CD4-positive, alpha-beta memory T cell (primary cell): ENCODE measurements at regions of chr1 and their contacts with region 1.

Region 1: GRCh38 chr1:92994105-92994712 is 32.9 kb upstream of the DIPK1A start:
- DNase-seq: peak; percentile 78 to 84 (median 80)
- H3K4me3 ChIP-seq: no peak overlapping the region
- H3K4me3 Mint-ChIP-seq: peak overlapping the region in 1 of 8 donors; percentile 80
- H3K27ac ChIP-seq: no peak overlapping the region
- H3K27ac Mint-ChIP-seq: peak overlapping the region; percentile 52 to 88 (median 77)
- H3K4me1 ChIP-seq: peaks cover 49% of the 10 kb centered on the region
- H3K4me1 Mint-ChIP-seq: peaks cover 36 to 50% (median 42%) of the 10 kb centered on the region in 4 donors
- H3K27me3 ChIP-seq: no peaks in the 10 kb centered on the region
- H3K27me3 Mint-ChIP-seq: no peaks in the 10 kb centered on the region

Region 2: DNA sequence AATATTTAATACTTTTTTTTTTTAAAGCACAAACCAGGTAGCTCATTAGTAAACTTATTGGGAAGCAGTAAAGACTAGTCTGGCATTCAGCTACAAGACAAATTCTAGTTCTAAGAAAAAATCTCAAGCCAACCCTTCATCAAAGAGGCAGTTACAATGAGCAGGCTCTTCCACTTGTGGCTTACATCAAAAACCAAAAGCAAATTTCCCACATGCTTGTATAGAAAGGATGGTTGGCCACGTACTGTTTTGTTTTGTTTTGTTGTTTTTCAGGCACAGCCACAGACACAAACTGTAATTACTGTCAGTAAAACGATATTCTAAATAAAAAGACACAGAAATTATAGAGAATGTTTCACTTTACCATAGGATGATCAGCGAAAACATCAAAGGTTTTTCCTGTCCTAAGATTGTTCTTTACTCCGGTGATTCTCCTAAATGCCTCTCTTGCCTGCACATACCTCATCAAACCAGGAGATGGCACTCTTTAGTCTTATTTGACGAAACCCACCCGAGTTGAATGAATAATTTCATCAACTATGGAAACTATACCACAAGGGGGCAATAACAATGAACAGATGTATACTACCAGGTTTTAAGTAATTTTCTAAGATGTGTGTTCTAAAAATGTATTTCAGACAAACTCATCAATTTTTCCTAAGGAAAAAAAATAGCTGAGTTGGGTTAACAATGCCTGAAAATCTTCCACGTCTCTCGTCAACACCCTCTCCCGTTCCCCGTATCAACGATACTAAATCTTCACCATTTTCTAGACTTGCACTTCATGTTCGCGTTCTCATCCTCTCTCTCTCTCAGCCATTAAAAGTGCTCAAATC is 135.4 kb before region 1 on chr1:
- CTCF ChIA-PET with region 1: interaction called, 195 read pairs
- POLR2A ChIA-PET with region 1: interaction called, 26 read pairs
- intact Hi-C with region 1: loop called (anchors 1 kb)
- DNase-seq: peak; percentile 70 to 84 (median 80)
- H3K4me3 ChIP-seq: no peak overlapping the region
- H3K4me3 Mint-ChIP-seq: peak overlapping the region; percentile 48 to 81 (median 71)
- H3K27ac ChIP-seq: peak overlapping the region; percentile 6
- H3K27ac Mint-ChIP-seq: peak overlapping the region; percentile 14 to 89 (median 68)
- H3K4me1 ChIP-seq: peaks cover 22% of the 10 kb centered on the region
- H3K4me1 Mint-ChIP-seq: peaks cover 14 to 17% (median 15%) of the 10 kb centered on the region in 4 donors
- H3K27me3 ChIP-seq: no peaks in the 10 kb centered on the region
- H3K27me3 Mint-ChIP-seq: no peaks in the 10 kb centered on the region

Region 3: DNA sequence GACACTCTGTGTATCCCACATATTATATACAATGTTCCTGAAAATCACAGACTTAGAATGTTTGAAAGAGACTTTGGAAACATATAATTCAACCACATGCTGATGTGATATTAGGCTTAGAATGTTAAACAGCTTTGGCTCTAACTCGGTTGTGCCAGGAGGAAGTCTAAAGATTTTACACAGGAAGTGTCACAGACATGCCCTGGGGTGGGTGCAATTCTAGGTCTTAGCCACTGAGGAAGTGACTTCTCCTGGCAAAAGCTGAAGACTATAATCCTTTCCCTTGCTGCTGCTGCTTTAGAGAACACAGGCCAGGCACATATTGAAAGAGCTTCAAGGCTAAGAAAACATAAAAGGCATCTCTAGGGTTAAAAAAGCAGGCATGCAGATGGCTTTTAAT is 111.4 kb before region 1 on chr1:
- CTCF ChIA-PET with region 1: interaction called, 33 read pairs
- POLR2A ChIA-PET with region 1: interaction called, 3 read pairs
- intact Hi-C with region 1: no loop called
- DNase-seq: peak; percentile 27 to 61 (median 37)
- H3K4me3 ChIP-seq: no peak overlapping the region
- H3K4me3 Mint-ChIP-seq: peak overlapping the region in 7 of 8 donors; percentile 0 to 66 (median 52)
- H3K27ac ChIP-seq: peak overlapping the region; percentile 12
- H3K27ac Mint-ChIP-seq: peak overlapping the region; percentile 72 to 94 (median 86)
- H3K4me1 ChIP-seq: peaks cover 51% of the 10 kb centered on the region
- H3K4me1 Mint-ChIP-seq: peaks cover 30 to 49% (median 36%) of the 10 kb centered on the region in 4 donors
- H3K27me3 ChIP-seq: no peaks in the 10 kb centered on the region
- H3K27me3 Mint-ChIP-seq: no peaks in the 10 kb centered on the region

Region 4: GRCh38 chr1:92951141-92951582 is 43.0 kb before region 1 on chr1:
- CTCF ChIA-PET with region 1: interaction called, 251 read pairs
- POLR2A ChIA-PET with region 1: interaction called, 6 read pairs
- intact Hi-C with region 1: loop called (anchors 1 kb)
- DNase-seq: peak in 4 of 5 donors; percentile 33 to 47 (median 39)
- H3K4me3 ChIP-seq: no peak overlapping the region
- H3K4me3 Mint-ChIP-seq: no peak overlapping the region
- H3K27ac ChIP-seq: peak overlapping the region; percentile 23
- H3K27ac Mint-ChIP-seq: no peak overlapping the region
- H3K4me1 ChIP-seq: peaks cover 59% of the 10 kb centered on the region
- H3K4me1 Mint-ChIP-seq: peaks cover 27 to 47% (median 31%) of the 10 kb centered on the region in 4 donors
- H3K27me3 ChIP-seq: no peaks in the 10 kb centered on the region
- H3K27me3 Mint-ChIP-seq: no peaks in the 10 kb centered on the region

Region 5: DNA sequence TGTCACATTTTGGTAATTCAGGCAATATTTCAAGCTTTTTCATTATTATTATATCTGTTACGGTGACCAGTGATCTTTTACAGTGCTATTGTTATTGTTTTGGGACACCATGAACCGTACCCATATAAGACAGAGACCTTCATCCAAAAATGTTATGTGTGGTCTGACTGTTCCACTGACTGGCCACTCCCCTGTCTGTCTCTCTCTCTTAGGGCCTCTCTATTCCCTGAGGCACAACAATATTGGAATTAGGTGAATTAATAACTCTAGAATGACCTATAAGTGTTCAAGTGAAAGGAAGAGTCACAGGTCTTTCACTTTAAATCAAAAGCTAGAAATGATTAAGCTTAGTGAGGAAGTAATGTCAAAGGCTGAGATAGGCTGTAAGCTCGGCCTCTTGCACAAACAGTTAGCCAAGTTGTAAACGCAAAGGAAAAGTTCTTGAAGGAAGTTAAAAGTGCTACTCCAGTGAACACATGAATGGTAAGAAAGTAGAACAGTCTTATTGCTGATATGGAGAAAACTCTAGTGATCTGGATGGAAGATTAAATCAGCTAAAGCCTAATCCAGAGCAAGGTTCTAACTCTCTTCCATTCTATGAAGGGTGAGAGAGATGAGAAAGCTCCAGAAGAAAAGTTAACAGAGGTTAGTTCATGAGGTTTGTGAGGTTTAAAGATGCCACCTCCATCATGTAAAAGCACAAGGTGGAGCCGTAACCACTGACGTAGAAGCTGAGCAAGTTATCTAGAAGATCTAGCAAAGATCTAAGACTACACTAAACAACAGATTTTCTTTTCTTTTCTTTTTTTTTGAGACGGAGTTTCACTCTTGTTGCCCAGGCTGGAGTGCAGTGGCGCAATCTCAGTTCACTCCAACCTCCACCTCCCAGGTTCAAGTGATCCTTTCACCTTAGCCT is 13.2 kb before region 1 on chr1:
- CTCF ChIA-PET with region 1: interaction called, 433 read pairs
- POLR2A ChIA-PET with region 1: interaction called, 37 read pairs
- intact Hi-C with region 1: loop called (anchors 1 kb)
- DNase-seq: peak; percentile 81 to 91 (median 87)
- H3K4me3 ChIP-seq: no peak overlapping the region
- H3K4me3 Mint-ChIP-seq: peak overlapping the region; percentile 32 to 86 (median 72)
- H3K27ac ChIP-seq: peak overlapping the region; percentile 77
- H3K27ac Mint-ChIP-seq: peak overlapping the region; percentile 88 to 99 (median 99)
- H3K4me1 ChIP-seq: peaks cover 58% of the 10 kb centered on the region
- H3K4me1 Mint-ChIP-seq: peaks cover 23 to 43% (median 35%) of the 10 kb centered on the region in 4 donors
- H3K27me3 ChIP-seq: no peaks in the 10 kb centered on the region
- H3K27me3 Mint-ChIP-seq: no peaks in the 10 kb centered on the region